GM12878 (cell line): ENCODE measurements at regions of chr6 and their contacts with region 1.

Region 1: DNA sequence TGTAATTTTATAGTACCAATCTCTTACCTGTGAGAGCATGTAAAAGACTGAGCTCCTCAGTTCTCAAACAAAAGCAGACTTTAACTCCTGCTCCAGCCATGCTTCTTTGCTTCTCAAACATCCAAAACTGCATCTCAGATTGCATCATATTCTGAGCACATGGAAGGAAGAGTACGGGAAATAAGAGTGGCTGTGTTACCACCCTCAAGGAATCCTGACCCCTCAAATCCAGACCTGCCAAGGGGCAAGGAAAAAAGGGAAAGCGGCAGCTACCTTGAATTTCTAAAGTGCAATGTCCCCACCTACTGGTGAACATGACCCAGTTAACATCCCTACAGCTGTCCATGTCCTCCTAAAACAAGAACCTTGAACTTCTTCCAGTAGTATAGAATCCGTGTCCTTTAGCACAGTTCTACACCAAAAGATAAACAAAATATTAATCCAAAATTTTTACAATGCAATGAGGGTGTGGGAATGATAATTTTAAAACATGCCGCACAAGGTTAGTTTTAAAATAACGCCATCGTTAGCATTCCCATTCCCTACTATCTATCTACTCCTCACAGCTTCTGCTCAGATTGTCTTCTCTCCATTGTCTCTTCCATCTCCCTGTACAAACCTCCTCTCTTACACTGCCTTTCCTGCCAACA is 34.1 kb upstream of the HLA-DQB1 start:
- DNase-seq: no peak
- ATAC-seq: peak; percentile 93
- H3K4me3 ChIP-seq: no peak overlapping the region
- H3K27ac ChIP-seq: no peak overlapping the region
- H3K4me1 ChIP-seq: no peaks in the 10 kb centered on the region
- H3K27me3 ChIP-seq: peaks cover 0 to 3% of the 10 kb centered on the region in 2 experiments; a peak in 2 of 4 replicates
- CTCF ChIP-seq: peak; percentile 65
- EP300 ChIP-seq: no peak
- POLR2A ChIP-seq: no peak
- RAD21 ChIP-seq: peak; percentile 76

Region 2: GRCh38 chr6:32402812-32403211 is 297.7 kb before region 1 on chr6:
- CTCF ChIA-PET with region 1: interaction called, 180 read pairs
- POLR2A ChIA-PET with region 1: interaction called, 3 read pairs
- RAD21 ChIA-PET with region 1: interaction called, 5 read pairs
- SMC1A ChIA-PET with region 1: interaction called, 3 read pairs
- in situ Hi-C with region 1: no loop called
- intact Hi-C with region 1: no loop called
- DNase-seq: no peak
- ATAC-seq: no peak
- H3K4me3 ChIP-seq: no peak overlapping the region
- H3K27ac ChIP-seq: no peak overlapping the region
- H3K4me1 ChIP-seq: peaks cover 4% of the 10 kb centered on the region
- H3K27me3 ChIP-seq: peaks cover 2 to 4% of the 10 kb centered on the region in 2 experiments; a peak in 1 of 4 replicates
- CTCF ChIP-seq: no peak
- EP300 ChIP-seq: no peak
- POLR2A ChIP-seq: no peak
- RAD21 ChIP-seq: no peak

Region 3: GRCh38 chr6:32424589-32425300 is 275.8 kb before region 1 on chr6:
- CTCF ChIA-PET with region 1: interaction called, 160 read pairs
- POLR2A ChIA-PET with region 1: no interaction called
- RAD21 ChIA-PET with region 1: interaction called, 17 read pairs
- SMC1A ChIA-PET with region 1: interaction called, 75 read pairs
- in situ Hi-C with region 1: loop called (anchors 5 kb)
- intact Hi-C with region 1: no loop called
- DNase-seq: no peak
- ATAC-seq: no peak
- H3K4me3 ChIP-seq: no peak overlapping the region
- H3K27ac ChIP-seq: no peak overlapping the region
- H3K4me1 ChIP-seq: no peaks in the 10 kb centered on the region
- H3K27me3 ChIP-seq: peaks cover 1 to 3% of the 10 kb centered on the region in 2 experiments; a peak in 2 of 4 replicates
- CTCF ChIP-seq: no peak
- EP300 ChIP-seq: no peak
- POLR2A ChIP-seq: no peak
- RAD21 ChIP-seq: no peak

Region 4: GRCh38 chr6:32439602-32440214 is 260.8 kb before region 1 on chr6 and contains the start of gene HLA-DRA:
- CTCF ChIA-PET with region 1: interaction called, 160 read pairs
- POLR2A ChIA-PET with region 1: interaction called, 3 read pairs
- RAD21 ChIA-PET with region 1: interaction called, 8 read pairs
- SMC1A ChIA-PET with region 1: interaction called, 15 read pairs
- in situ Hi-C with region 1: no loop called
- intact Hi-C with region 1: no loop called
- DNase-seq: peak; percentile 99
- ATAC-seq: peak; percentile 71
- H3K4me3 ChIP-seq: peak within 1 kb of the TSS; percentile 99
- H3K27ac ChIP-seq: peak within 1 kb of the TSS; percentile 100
- H3K4me1 ChIP-seq: peaks cover 29% of the 10 kb centered on the region
- H3K27me3 ChIP-seq: no peaks in the 10 kb centered on the region
- CTCF ChIP-seq: no peak
- EP300 ChIP-seq: peak; percentile 66 to 68; a peak in 3 of 4 replicates
- POLR2A ChIP-seq: peak; percentile 95
- RAD21 ChIP-seq: no peak
- polyA plus RNA-seq, gene HLA-DRA: 4,131 to 6,024 TPM

Region 5: DNA sequence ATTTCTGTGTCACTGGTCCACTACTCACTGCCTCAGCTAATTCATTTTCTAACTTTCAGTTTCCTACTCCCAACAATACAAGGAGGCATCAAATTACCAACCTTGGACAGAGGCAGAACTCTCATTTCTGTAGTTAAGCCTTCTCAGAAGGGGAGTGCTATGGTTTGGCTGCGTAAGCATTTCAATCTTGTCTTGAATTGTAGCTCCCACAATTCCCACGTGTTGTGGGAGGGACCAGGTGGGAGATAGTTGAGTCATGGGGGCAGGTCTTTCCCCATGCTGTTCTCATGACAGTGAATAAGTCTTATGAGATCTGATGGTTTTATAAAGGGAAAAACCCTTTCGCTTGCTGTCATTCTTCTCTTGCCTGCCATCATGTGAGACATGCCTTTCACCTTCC is 237.9 kb before region 1 on chr6:
- CTCF ChIA-PET with region 1: interaction called, 8 read pairs
- POLR2A ChIA-PET with region 1: interaction called, 3 read pairs
- RAD21 ChIA-PET with region 1: interaction called, 6 read pairs
- SMC1A ChIA-PET with region 1: interaction called, 24 read pairs
- in situ Hi-C with region 1: no loop called
- intact Hi-C with region 1: no loop called
- DNase-seq: peak; percentile 76
- ATAC-seq: peak; percentile 94
- H3K4me3 ChIP-seq: no peak overlapping the region
- H3K27ac ChIP-seq: no peak overlapping the region
- H3K4me1 ChIP-seq: peaks cover 6% of the 10 kb centered on the region
- H3K27me3 ChIP-seq: no peaks in the 10 kb centered on the region
- CTCF ChIP-seq: no peak
- EP300 ChIP-seq: peak; percentile 13 to 74; a peak in 2 of 4 replicates
- POLR2A ChIP-seq: no peak
- RAD21 ChIP-seq: no peak

Region 6: DNA sequence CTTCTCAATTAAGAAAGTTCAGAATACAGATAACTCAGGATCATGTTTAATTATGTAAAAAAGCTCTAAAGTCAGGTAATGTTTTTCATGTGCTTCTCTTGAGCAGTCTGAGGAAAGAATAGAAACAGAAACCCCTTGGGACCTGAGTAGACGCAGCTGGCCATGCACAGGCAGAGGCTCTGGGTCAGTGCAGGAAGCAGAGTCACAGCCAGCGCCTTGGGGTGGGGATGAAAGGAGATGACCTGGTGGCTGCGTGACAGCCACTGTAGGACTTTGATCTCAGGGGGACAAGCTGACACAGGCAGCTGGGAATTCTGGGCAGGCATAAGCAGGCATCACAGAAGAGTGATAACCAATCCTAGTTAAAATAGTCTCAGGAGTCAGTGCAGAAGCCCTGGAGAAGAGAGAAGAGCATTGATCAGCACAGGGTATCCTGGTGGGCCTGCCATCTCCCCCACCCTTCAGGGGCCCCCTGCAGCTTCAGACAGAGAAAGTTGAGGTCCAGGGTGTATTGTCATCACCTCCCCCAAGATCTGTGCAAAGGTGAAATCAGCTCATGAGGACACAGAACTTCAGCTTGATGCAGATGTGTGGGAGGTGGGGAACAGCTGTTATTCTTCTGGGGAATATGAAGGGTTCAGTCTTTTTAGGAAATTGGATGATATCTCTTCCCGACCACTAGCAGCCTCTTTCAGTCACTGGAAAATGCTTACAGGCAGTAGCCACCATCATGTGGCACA is 40.5 kb before region 1 on chr6:
- CTCF ChIA-PET with region 1: no interaction called
- POLR2A ChIA-PET with region 1: no interaction called
- RAD21 ChIA-PET with region 1: no interaction called
- SMC1A ChIA-PET with region 1: no interaction called
- in situ Hi-C with region 1: no loop called
- intact Hi-C with region 1: no loop called
- DNase-seq: no peak
- ATAC-seq: peak; percentile 71
- H3K4me3 ChIP-seq: no peak overlapping the region
- H3K27ac ChIP-seq: peak overlapping the region; percentile 46; the same call in 1 of the 2 replicates
- H3K4me1 ChIP-seq: no peaks in the 10 kb centered on the region; the same call in 1 of the 2 replicates
- H3K27me3 ChIP-seq: no peaks in the 10 kb centered on the region
- CTCF ChIP-seq: no peak
- EP300 ChIP-seq: no peak
- POLR2A ChIP-seq: peak; percentile 35; the same call in 1 of the 2 replicates
- RAD21 ChIP-seq: no peak

Region 7: DNA sequence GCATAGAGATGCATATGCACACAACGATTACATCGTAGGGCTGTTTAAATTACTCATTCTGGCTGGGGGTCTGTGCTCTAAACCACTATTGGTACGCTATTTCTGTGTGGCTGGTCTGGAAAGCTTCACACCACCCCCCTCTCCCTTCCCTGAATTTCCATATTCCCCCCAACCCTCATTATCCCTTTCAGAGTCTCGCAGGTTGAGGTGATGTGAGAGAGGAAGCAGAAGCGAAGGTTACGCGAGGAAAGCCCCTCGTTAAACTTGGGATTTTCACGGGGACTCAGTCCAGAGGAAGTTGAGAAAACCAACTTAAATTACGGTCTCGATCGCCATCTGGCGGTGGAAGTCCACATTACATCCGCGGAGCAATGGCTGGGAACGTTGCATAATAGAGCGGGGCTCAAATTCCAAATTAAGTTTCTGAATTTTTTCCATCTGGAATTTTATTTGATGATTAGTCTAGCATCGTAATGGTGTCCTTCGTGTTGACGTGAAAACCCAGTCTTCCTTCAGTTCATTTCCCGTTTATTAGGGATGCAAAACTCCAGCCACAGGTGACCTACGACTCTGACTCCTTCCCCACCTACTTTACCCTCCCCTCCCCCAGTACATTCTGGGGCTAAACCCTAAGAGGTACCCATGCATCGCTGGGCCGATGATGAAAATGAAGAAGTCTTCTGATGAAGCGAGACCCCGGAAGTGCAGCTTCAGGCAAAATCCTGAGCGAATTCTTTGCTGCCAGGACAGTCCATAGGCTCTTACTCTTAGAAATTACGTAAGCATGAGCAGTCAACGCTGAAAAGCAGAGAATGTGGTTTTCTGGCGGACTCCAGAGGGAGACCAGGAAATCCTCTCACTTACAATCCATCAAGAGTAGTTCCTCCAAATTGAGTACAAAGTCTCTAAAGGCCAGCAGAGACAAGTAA is 96.6 kb after region 1 on chr6:
- CTCF ChIA-PET with region 1: interaction called, 15 read pairs
- POLR2A ChIA-PET with region 1: no interaction called
- RAD21 ChIA-PET with region 1: interaction called, 9 read pairs
- SMC1A ChIA-PET with region 1: interaction called, 18 read pairs
- in situ Hi-C with region 1: no loop called
- intact Hi-C with region 1: no loop called
- DNase-seq: no peak
- ATAC-seq: peak; percentile 89
- H3K4me3 ChIP-seq: peak overlapping the region; percentile 29; the same call in 1 of the 2 replicates
- H3K27ac ChIP-seq: peak overlapping the region; percentile 32
- H3K4me1 ChIP-seq: peaks cover 19% of the 10 kb centered on the region
- H3K27me3 ChIP-seq: peaks cover 0 to 5% of the 10 kb centered on the region in 2 experiments; a peak in 2 of 4 replicates
- CTCF ChIP-seq: peak; percentile 69 to 89 (median 86)
- EP300 ChIP-seq: no peak
- POLR2A ChIP-seq: no peak
- RAD21 ChIP-seq: peak; percentile 74